ENCODE measurements at regions of chr2 and their contacts with region 1.

Region 1: DNA sequence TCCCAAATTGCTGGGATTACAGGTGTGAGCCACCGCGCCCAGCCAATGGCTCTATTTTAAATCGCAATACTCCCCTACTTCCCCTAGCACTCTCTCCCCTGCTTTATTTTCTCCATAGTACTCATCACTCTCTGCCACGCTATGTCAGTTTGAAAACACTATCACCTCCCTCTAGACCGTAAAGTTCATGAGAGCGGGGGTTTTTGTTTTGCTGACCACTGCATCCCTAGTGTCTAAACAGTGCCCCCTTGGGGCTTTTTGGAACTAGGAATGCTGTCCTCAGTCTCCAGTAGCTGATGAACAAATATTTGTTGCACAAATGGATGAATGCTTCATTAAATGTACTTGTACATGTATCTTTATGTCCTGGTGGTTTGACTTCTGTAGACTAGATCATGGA is 44.1 kb downstream of the ATOH8 start:
- DNase-seq: peak in 2 of 5 donors; percentile 21 to 46
- ATAC-seq: peak in 3 of 4 donors; percentile 34 to 60 (median 49)
- H3K4me3 ChIP-seq: no peak overlapping the region
- H3K27ac ChIP-seq: peak overlapping the region in 2 of 12 donors; percentile 55 to 80
- H3K4me1 ChIP-seq: peaks cover 12 to 67% (median 49%) of the 10 kb centered on the region in 12 donors
- H3K27me3 ChIP-seq: no peaks in the 10 kb centered on the region
- CTCF ChIP-seq: peak; percentile 40 to 74 (median 60)
- POLR2A ChIP-seq: no peak

Region 2: GRCh38 chr2:85728883-85729824 is 68.8 kb before region 1 on chr2:
- intact Hi-C with region 1: loop called in 5 of 10 experiments (anchors 2 to 5 kb)
- DNase-seq: peak; percentile 89 to 95 (median 90)
- ATAC-seq: peak; percentile 89 to 95 (median 94)
- H3K4me3 ChIP-seq: no peak overlapping the region
- H3K27ac ChIP-seq: peak overlapping the region in 9 of 12 donors; percentile 15 to 71 (median 52)
- H3K4me1 ChIP-seq: peaks cover 0 to 47% (median 32%) of the 10 kb centered on the region in 12 donors
- H3K27me3 ChIP-seq: no peaks in the 10 kb centered on the region
- CTCF ChIP-seq: peak; percentile 90 to 99 (median 98)
- POLR2A ChIP-seq: no peak

Region 3: DNA sequence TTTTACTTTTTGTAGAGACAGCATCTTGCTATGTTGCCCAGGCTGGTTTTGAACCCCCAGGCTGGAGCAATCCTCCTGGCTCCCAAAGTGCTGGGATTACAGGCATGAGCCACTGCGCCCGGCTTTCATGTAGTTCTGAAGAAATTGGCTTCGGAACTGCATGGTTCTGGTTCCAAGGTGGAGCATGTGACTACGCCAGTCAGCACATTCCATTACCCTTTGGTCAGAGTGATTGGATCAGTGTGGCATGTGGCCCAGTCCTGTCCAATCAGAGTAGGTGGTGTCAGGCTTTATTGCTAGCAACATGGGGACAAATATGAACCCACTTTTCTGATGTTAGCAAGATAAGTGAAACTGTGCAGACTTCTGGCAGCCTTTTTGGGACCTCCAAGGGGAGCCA is 60.4 kb before region 1 on chr2:
- intact Hi-C with region 1: loop called in 1 of 10 experiments (anchors 5 kb)
- DNase-seq: peak in 4 of 5 donors; percentile 72 to 78 (median 73)
- ATAC-seq: peak; percentile 44 to 69 (median 60)
- H3K4me3 ChIP-seq: no peak overlapping the region
- H3K27ac ChIP-seq: peak overlapping the region in 9 of 12 donors; percentile 31 to 69 (median 56)
- H3K4me1 ChIP-seq: peaks cover 0 to 66% (median 33%) of the 10 kb centered on the region in 12 donors
- H3K27me3 ChIP-seq: no peaks in the 10 kb centered on the region
- CTCF ChIP-seq: no peak
- POLR2A ChIP-seq: no peak

Region 4: GRCh38 chr2:85772019-85772745 is 25.7 kb before region 1 on chr2:
- intact Hi-C with region 1: loop called in 3 of 10 experiments (anchors 2 kb)
- DNase-seq: peak; percentile 98 to 99 (median 99)
- ATAC-seq: peak; percentile 92
- H3K4me3 ChIP-seq: peak overlapping the region in 10 of 12 donors; percentile 3 to 41 (median 28)
- H3K27ac ChIP-seq: peak overlapping the region; percentile 73 to 95 (median 91)
- H3K4me1 ChIP-seq: peaks cover 59 to 96% (median 90%) of the 10 kb centered on the region in 12 donors
- H3K27me3 ChIP-seq: no peaks in the 10 kb centered on the region
- CTCF ChIP-seq: peak in 8 of 12 donors; percentile 18 to 48 (median 24)
- POLR2A ChIP-seq: peak in 1 of 2 donors; percentile 45

Region 5: GRCh38 chr2:85777441-85777861 is 20.5 kb before region 1 on chr2:
- intact Hi-C with region 1: loop called in 3 of 10 experiments (anchors 2 kb)
- DNase-seq: peak in 4 of 5 donors; percentile 58 to 71 (median 67)
- ATAC-seq: peak; percentile 12 to 44 (median 16)
- H3K4me3 ChIP-seq: no peak overlapping the region
- H3K27ac ChIP-seq: peak overlapping the region; percentile 46 to 95 (median 90)
- H3K4me1 ChIP-seq: peaks cover 36 to 88% (median 70%) of the 10 kb centered on the region in 12 donors
- H3K27me3 ChIP-seq: no peaks in the 10 kb centered on the region
- CTCF ChIP-seq: no peak
- POLR2A ChIP-seq: no peak